ENCODE measurements at regions of chr4 and their contacts with region 1.

Region 1: GRCh38 chr4:183261953-183262775 is 57.9 kb downstream of the CLDN22 start:
- DNase-seq: peak; percentile 47 to 67
- ATAC-seq: peak; percentile 95 to 96
- H3K4me3 ChIP-seq: no peak overlapping the region
- H3K27ac ChIP-seq: peak overlapping the region; percentile 12 to 65; a peak in 2 of 6 replicates
- H3K4me1 ChIP-seq: peaks cover 16% of the 10 kb centered on the region
- CTCF ChIP-seq: peak; percentile 61
- EP300 ChIP-seq: no peak
- POLR2A ChIP-seq: no peak
- RAD21 ChIP-seq: peak; percentile 70 to 81

Region 2: GRCh38 chr4:182925298-182925738 is 336.8 kb before region 1 on chr4:
- CTCF ChIA-PET with region 1: interaction called, 23 read pairs
- POLR2A ChIA-PET with region 1: no interaction called
- DNase-seq: peak; percentile 27 to 85
- ATAC-seq: peak; percentile 94 to 98
- H3K4me3 ChIP-seq: no peak overlapping the region
- H3K27ac ChIP-seq: no peak overlapping the region
- H3K4me1 ChIP-seq: 0 out of 3 replicates have a peak, but pooled peaks cover 8% of the 10 kb centered on the region
- CTCF ChIP-seq: peak; percentile 72
- EP300 ChIP-seq: no peak
- POLR2A ChIP-seq: no peak
- RAD21 ChIP-seq: peak; percentile 68 to 73

Region 3: DNA sequence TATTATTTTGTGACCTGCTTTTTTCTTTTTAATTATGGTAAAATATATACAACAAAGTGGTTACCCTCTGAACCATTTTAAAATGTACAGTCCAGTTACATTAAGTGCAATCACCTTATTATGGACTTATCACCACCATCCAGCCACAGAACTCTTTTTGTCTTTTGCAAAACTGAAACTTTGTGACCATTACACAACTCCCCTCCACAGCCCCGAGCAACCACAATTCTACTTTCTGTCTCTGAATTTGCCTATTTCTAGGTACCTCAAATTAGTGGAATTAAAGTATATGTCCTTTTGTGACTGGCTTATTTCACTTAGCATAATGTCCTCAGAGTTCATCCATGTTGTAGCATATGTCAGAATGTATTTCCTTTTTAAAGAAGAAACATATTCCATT is 202.4 kb before region 1 on chr4:
- CTCF ChIA-PET with region 1: interaction called, 13 read pairs
- POLR2A ChIA-PET with region 1: no interaction called
- DNase-seq: no peak
- ATAC-seq: no peak
- H3K4me3 ChIP-seq: no peak overlapping the region
- H3K27ac ChIP-seq: no peak overlapping the region
- H3K4me1 ChIP-seq: no peaks in the 10 kb centered on the region
- CTCF ChIP-seq: no peak
- EP300 ChIP-seq: no peak
- POLR2A ChIP-seq: no peak
- RAD21 ChIP-seq: no peak

Region 4: DNA sequence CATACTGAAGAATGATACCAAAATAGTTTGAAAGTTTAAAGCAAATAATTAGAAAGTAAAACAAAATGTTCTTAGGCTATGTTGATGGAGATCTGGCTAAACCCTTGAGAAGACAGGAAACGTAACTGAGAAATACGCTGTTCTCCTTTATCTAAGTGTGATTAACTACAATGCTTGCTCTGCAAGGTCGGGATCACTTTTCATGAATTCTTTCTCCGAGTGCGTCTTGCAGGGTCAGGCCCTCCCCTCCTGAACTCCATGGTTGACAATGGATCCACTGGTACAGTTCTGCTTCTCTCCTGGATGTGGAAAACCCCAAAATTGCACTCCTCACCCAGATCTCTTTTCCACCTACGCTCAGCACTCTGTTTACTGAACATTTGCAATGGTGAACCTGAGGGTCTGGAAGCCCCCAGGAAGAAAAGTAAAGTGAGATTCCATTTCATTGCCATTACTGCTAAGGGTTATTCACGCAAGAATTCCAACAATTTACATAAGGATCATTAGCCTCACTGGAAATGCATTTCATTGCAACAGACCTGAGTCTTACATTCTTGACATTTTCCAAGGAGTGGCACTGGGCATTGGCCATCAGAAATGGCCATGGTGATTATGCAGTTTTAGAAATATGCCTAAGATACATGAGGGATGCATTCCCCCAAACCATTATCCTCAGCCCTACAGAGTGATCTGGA is 187.7 kb before region 1 on chr4:
- CTCF ChIA-PET with region 1: interaction called, 168 read pairs
- POLR2A ChIA-PET with region 1: no interaction called
- DNase-seq: peak in 1 of 2 experiments; percentile 18
- ATAC-seq: peak in 1 of 2 experiments; percentile 60; a peak in 3 of 6 replicates
- H3K4me3 ChIP-seq: no peak overlapping the region
- H3K27ac ChIP-seq: peak overlapping the region in 1 of 2 experiments; percentile 28; a peak in 1 of 6 replicates
- H3K4me1 ChIP-seq: peaks cover 12% of the 10 kb centered on the region; the same call in 2 of the 3 replicates
- CTCF ChIP-seq: no peak
- EP300 ChIP-seq: no peak
- POLR2A ChIP-seq: no peak
- RAD21 ChIP-seq: no peak

Region 5: GRCh38 chr4:183098723-183099536 is 163.2 kb before region 1 on chr4 and contains the start of gene WWC2:
- CTCF ChIA-PET with region 1: interaction called, 13 read pairs
- POLR2A ChIA-PET with region 1: no interaction called
- DNase-seq: peak; percentile 69 to 91
- ATAC-seq: peak; percentile 85 to 92
- H3K4me3 ChIP-seq: peak within 1 kb of the TSS; percentile 98
- H3K27ac ChIP-seq: peak within 1 kb of the TSS; percentile 99
- H3K4me1 ChIP-seq: peaks cover 32% of the 10 kb centered on the region
- CTCF ChIP-seq: no peak
- EP300 ChIP-seq: no peak
- POLR2A ChIP-seq: peak; percentile 58
- RAD21 ChIP-seq: no peak; a peak in 1 of 5 replicates
- polyA plus RNA-seq, gene WWC2: 22.5 and 26.9 TPM in 2 replicates

Region 6: DNA sequence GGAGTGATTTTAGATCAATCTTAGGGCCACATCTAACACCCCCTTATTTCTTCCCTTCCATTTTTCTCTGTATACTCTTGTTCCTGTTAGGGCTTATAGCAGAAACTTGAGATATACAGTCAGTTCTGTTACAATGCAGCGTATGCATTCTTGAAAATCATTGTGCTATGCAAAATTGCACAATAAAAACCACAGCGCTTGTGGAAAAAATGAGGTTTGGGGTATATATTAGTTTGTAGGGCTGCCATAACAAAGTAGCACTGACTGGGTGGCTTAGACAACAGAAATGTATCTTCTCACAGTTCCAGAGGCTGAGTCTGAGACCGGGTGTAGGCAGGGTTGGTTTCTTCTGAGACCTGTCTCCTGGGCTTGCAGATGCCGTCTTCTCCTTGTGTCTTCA is 104.1 kb before region 1 on chr4:
- CTCF ChIA-PET with region 1: no interaction called
- POLR2A ChIA-PET with region 1: no interaction called
- DNase-seq: no peak
- ATAC-seq: no peak
- H3K4me3 ChIP-seq: no peak overlapping the region
- H3K27ac ChIP-seq: no peak overlapping the region
- H3K4me1 ChIP-seq: peaks cover 16% of the 10 kb centered on the region; the same call in 2 of the 3 replicates
- CTCF ChIP-seq: no peak
- EP300 ChIP-seq: no peak
- POLR2A ChIP-seq: no peak
- RAD21 ChIP-seq: no peak

Region 7: DNA sequence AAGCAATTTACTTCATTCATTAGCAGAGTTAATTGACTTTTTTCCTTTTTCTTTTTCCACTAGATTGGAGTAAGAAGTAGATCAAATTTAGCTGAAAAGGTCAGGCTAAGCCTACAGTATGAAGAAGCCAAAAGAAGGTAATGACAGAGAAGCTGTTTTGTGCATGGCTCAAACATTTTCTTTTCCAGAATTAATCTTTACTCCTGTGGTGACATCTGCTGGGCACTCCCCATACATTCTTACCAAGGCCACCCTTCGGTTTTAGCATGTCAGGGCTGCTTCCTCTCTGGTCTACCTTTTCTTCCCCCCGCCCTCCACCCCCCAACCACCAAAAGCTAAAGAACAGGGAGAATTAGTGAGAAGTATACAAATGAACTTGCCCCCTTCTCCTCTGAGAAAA is 12.3 kb before region 1 on chr4:
- CTCF ChIA-PET with region 1: interaction called, 66 read pairs
- POLR2A ChIA-PET with region 1: no interaction called
- DNase-seq: peak; percentile 11 to 39
- ATAC-seq: peak; percentile 54 to 86; a peak in 4 of 6 replicates
- H3K4me3 ChIP-seq: no peak overlapping the region
- H3K27ac ChIP-seq: no peak overlapping the region
- H3K4me1 ChIP-seq: no peaks in the 10 kb centered on the region
- CTCF ChIP-seq: peak; percentile 55
- EP300 ChIP-seq: no peak
- POLR2A ChIP-seq: no peak
- RAD21 ChIP-seq: peak; percentile 72 to 80

Measured in A549 (cell line).